Right cardiac atrium (tissue), 5 donors: ENCODE measurements at regions of chr18 and their contacts with region 1.

Region 1: DNA sequence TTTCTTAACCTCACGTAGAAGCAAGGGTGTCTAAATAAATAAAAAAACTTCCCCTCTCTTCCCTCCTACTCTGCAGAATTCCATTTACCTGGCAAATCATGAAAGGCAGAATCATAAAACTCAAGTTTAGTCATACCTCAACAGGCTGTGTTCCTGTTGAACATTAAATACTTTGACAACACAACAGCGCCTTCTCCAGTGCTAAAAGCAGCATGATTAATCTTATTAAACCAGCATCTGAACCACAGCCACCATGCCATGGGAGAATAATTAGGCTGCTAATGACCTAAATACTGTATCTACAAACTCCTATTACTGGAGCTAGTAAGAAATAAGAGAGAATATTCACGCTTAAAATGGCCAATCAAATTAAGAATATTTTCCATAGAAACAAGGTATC is 68.1 kb downstream of the CDH2 start:
- DNase-seq: no peak
- ATAC-seq: no peak
- H3K4me3 ChIP-seq: no peak overlapping the region
- H3K27ac ChIP-seq: no peak overlapping the region
- H3K4me1 ChIP-seq: peaks cover 8% of the 10 kb centered on the region
- H3K27me3 ChIP-seq: no peaks in the 10 kb centered on the region

Region 2: GRCh38 chr18:27942701-27943100 is 166.1 kb before region 1 on chr18:
- intact Hi-C with region 1: no loop called
- DNase-seq: no peak
- ATAC-seq: no peak
- H3K4me3 ChIP-seq: no peak overlapping the region
- H3K27ac ChIP-seq: no peak overlapping the region
- H3K4me1 ChIP-seq: no peaks in the 10 kb centered on the region
- H3K27me3 ChIP-seq: no peaks in the 10 kb centered on the region

Region 3: DNA sequence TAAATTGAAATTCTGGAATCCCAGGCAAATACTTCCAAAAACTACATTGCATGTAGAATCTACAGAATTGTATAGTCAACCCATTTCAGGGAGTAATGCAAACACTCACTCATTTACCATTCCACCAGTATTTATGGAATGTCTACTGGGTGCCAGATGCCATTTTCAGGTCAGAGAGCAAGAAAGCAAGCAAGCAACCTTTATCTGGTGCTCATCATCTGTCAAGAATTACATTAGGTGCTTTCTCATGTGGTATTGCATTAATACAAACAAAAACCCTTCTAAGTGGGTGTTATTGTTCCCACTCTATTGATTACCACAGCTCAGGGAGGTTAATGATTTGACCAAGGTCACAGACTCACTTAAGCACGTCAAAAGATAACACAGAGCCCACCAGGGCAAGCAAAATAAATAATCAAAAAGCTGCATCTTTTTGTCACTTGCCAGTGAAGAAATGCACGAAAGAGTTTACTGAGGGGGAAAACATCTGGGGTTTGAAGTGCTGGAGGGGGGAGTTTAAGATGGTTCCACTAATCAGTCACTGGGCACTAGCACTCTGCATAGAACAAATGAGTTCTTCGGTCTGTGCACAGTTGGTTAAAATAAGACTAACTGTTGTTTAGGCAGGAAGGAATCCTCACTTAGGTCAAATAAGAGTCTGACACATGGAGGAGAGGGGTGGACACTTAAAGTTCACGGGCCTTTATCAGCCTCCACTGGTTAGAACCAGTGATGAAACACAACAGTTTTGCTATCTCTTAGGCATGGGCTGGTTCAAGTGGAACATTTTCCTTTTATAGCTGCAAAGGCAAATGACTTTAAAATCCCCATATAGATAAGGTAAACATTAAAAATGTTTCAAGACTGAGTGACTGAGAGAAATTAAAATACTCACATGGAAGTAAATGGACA is 140.6 kb before region 1 on chr18:
- intact Hi-C with region 1: no loop called
- DNase-seq: no peak
- ATAC-seq: peak; percentile 65 to 67
- H3K4me3 ChIP-seq: no peak overlapping the region
- H3K27ac ChIP-seq: peak overlapping the region; percentile 23
- H3K4me1 ChIP-seq: no peaks in the 10 kb centered on the region
- H3K27me3 ChIP-seq: no peaks in the 10 kb centered on the region

Region 4: GRCh38 chr18:28003451-28003850 is 105.4 kb before region 1 on chr18:
- intact Hi-C with region 1: loop called in 1 of 4 experiments (anchors 10 kb)
- DNase-seq: no peak
- ATAC-seq: peak; percentile 46 to 65
- H3K4me3 ChIP-seq: no peak overlapping the region
- H3K27ac ChIP-seq: no peak overlapping the region
- H3K4me1 ChIP-seq: peaks cover 2% of the 10 kb centered on the region
- H3K27me3 ChIP-seq: no peaks in the 10 kb centered on the region

Region 5: DNA sequence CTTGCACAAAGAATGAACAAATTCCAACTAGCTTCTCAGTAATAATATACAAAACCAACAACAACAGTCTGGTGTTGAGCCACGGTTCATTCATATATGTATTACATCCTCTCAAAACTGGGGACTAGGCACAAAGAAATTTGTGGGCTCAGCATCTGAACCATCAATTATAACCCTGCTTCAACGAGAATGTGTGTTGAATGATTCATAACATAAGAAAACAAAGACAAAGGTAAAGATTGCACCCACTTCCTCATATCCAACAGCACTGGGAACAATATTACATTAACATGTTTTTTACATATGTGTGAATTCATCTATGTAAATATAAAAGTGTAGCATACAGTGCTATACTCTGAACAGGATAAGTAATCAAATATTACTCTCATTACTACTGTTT is 76.6 kb before region 1 on chr18:
- intact Hi-C with region 1: no loop called
- DNase-seq: no peak
- ATAC-seq: no peak
- H3K4me3 ChIP-seq: no peak overlapping the region
- H3K27ac ChIP-seq: no peak overlapping the region
- H3K4me1 ChIP-seq: peaks cover 3% of the 10 kb centered on the region
- H3K27me3 ChIP-seq: no peaks in the 10 kb centered on the region

Region 6: GRCh38 chr18:28236487-28236886 is 127.7 kb after region 1 on chr18:
- intact Hi-C with region 1: no loop called
- DNase-seq: no peak
- ATAC-seq: no peak
- H3K4me3 ChIP-seq: no peak overlapping the region
- H3K27ac ChIP-seq: no peak overlapping the region
- H3K4me1 ChIP-seq: no peaks in the 10 kb centered on the region
- H3K27me3 ChIP-seq: no peaks in the 10 kb centered on the region